WTC11 (cell line): ENCODE measurements at regions of chr11 and their contacts with region 1.

Region 1: GRCh38 chr11:95089620-95090542 is at the start of gene ENDOD1:
- DNase-seq: peak; percentile 82
- ATAC-seq: peak; percentile 93
- H3K4me3 Mint-ChIP-seq: peak within 1 kb of the TSS; percentile 81
- H3K27ac Mint-ChIP-seq: no peak within 1 kb of the TSS
- H3K4me1 Mint-ChIP-seq: peaks cover 37% of the 10 kb centered on the region
- H3K27me3 Mint-ChIP-seq: peaks cover 67% of the 10 kb centered on the region
- CTCF ChIP-seq: no peak
- total RNA-seq, gene ENDOD1: 2.6 to 3.3 TPM (median 3.2 TPM) in 3 replicates

Region 2: GRCh38 chr11:94656968-94657367 is 432.9 kb before region 1 on chr11:
- CTCF ChIA-PET with region 1: no interaction called
- POLR2A ChIA-PET with region 1: no interaction called
- DNase-seq: no peak
- ATAC-seq: peak; percentile 51
- H3K4me3 Mint-ChIP-seq: peak overlapping the region; percentile 20
- H3K27ac Mint-ChIP-seq: peak overlapping the region; percentile 89
- H3K4me1 Mint-ChIP-seq: peaks cover 95% of the 10 kb centered on the region
- H3K27me3 Mint-ChIP-seq: no peaks in the 10 kb centered on the region
- CTCF ChIP-seq: no peak

Region 3: GRCh38 chr11:95108159-95108611 is 18.3 kb after region 1 on chr11:
- CTCF ChIA-PET with region 1: interaction called, 10 read pairs
- POLR2A ChIA-PET with region 1: no interaction called
- DNase-seq: no peak
- ATAC-seq: peak; percentile 41
- H3K4me3 Mint-ChIP-seq: peak overlapping the region; percentile 60
- H3K27ac Mint-ChIP-seq: peak overlapping the region; percentile 37; the same call in 1 of the 2 replicates
- H3K4me1 Mint-ChIP-seq: peaks cover 30% of the 10 kb centered on the region
- H3K27me3 Mint-ChIP-seq: no peaks in the 10 kb centered on the region; the same call in 1 of the 2 replicates
- CTCF ChIP-seq: no peak

Region 4: GRCh38 chr11:95119374-95120060 is 29.6 kb after region 1 on chr11:
- CTCF ChIA-PET with region 1: no interaction called
- POLR2A ChIA-PET with region 1: no interaction called
- DNase-seq: no peak
- ATAC-seq: no peak
- H3K4me3 Mint-ChIP-seq: no peak overlapping the region
- H3K27ac Mint-ChIP-seq: no peak overlapping the region
- H3K4me1 Mint-ChIP-seq: no peaks in the 10 kb centered on the region
- H3K27me3 Mint-ChIP-seq: no peaks in the 10 kb centered on the region
- CTCF ChIP-seq: no peak

Region 5: DNA sequence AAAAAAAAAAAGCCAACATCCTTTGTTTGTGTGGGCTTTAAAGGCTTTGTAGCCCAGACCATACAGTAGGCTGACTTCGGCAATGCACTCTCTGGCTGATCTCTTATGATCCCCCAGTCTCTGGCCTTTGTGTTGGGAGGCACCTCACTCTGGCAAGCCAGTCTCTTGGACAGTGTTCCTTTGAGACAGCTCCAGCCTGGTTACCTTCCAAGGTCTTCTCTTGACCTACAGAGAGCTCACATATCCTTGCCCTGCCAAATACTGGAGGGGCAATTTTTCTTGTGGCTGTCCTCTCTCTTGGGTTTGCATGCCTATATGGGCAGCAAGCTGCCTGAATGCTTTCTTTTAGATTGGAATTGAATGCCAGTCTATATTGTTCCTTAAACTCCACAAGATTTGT is 71.4 kb after region 1 on chr11:
- CTCF ChIA-PET with region 1: no interaction called
- POLR2A ChIA-PET with region 1: no interaction called
- DNase-seq: no peak
- ATAC-seq: no peak
- H3K4me3 Mint-ChIP-seq: no peak overlapping the region
- H3K27ac Mint-ChIP-seq: no peak overlapping the region
- H3K4me1 Mint-ChIP-seq: peaks cover 11% of the 10 kb centered on the region
- H3K27me3 Mint-ChIP-seq: no peaks in the 10 kb centered on the region
- CTCF ChIP-seq: no peak

Region 6: GRCh38 chr11:95487391-95487790 is 397.5 kb after region 1 on chr11:
- CTCF ChIA-PET with region 1: no interaction called
- POLR2A ChIA-PET with region 1: no interaction called
- DNase-seq: no peak
- ATAC-seq: peak; percentile 72
- H3K4me3 Mint-ChIP-seq: no peak overlapping the region
- H3K27ac Mint-ChIP-seq: 0 out of 2 replicates have a peak overlapping the region, but pooled peaks have one; percentile 77
- H3K4me1 Mint-ChIP-seq: peaks cover 13% of the 10 kb centered on the region
- H3K27me3 Mint-ChIP-seq: peaks cover 10% of the 10 kb centered on the region
- CTCF ChIP-seq: no peak